Mammary epithelial cell (primary cell): ENCODE measurements at regions of chr2 and their contacts with region 1.

Region 1: GRCh38 chr2:63841254-63842022 is at the start of gene UGP2:
- DNase-seq: peak; percentile 94
- H3K4me3 ChIP-seq: peak within 1 kb of the TSS; percentile 77 to 99 (median 98)
- H3K27ac ChIP-seq: peak within 1 kb of the TSS; percentile 92
- H3K4me1 ChIP-seq: peaks cover 18% of the 10 kb centered on the region
- H3K27me3 ChIP-seq: no peaks in the 10 kb centered on the region
- CTCF ChIP-seq: peak in 1 of 2 donors; percentile 35
- total RNA-seq, gene UGP2: 141 to 248 TPM

Region 2: GRCh38 chr2:63588385-63589147 is 252.9 kb before region 1 on chr2 and contains the starts of genes MDH1 and WDPCP:
- CTCF ChIA-PET with region 1: no interaction called
- dilution Hi-C with region 1: no loop called
- in situ Hi-C with region 1: no loop called
- intact Hi-C with region 1: loop called (anchors 1 kb)
- DNase-seq: peak; percentile 100
- H3K4me3 ChIP-seq: peak within 1 kb of the TSS; percentile 77 to 91 (median 88)
- H3K27ac ChIP-seq: peak within 1 kb of the TSS; percentile 50
- H3K4me1 ChIP-seq: peaks cover 16% of the 10 kb centered on the region
- H3K27me3 ChIP-seq: no peaks in the 10 kb centered on the region
- CTCF ChIP-seq: no peak
- total RNA-seq, gene MDH1: 112 to 133 TPM
- total RNA-seq, gene WDPCP: 5.4 to 11.0 TPM

Region 3: GRCh38 chr2:63736354-63736753 is 105.1 kb before region 1 on chr2:
- CTCF ChIA-PET with region 1: no interaction called
- dilution Hi-C with region 1: no loop called
- in situ Hi-C with region 1: no loop called
- intact Hi-C with region 1: loop called (anchors 1 kb)
- DNase-seq: peak; percentile 13
- H3K4me3 ChIP-seq: no peak overlapping the region
- H3K27ac ChIP-seq: peak overlapping the region; percentile 92
- H3K4me1 ChIP-seq: peaks cover 46% of the 10 kb centered on the region
- H3K27me3 ChIP-seq: no peaks in the 10 kb centered on the region
- CTCF ChIP-seq: no peak

Region 4: DNA sequence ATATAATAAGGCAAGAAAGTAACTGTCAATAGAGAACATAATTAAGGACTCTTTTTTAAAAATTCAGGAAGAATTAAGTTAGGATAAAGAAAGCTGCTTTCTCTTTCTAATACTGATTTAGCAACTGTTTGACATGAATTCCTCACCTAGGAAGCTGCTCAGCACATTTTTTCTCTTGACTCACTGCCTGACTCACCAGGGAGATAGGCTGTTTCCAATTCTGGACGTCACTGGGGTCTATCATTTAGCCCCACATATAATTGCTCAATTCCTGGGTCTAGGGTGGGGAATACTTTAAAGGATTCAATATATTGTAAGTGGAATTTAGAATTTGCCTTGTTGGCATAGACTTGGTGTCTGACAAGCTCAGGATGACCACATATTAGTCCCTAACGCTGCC is 50.5 kb before region 1 on chr2:
- CTCF ChIA-PET with region 1: no interaction called
- dilution Hi-C with region 1: no loop called
- in situ Hi-C with region 1: no loop called
- intact Hi-C with region 1: loop called (anchors 1 kb)
- DNase-seq: peak; percentile 67
- H3K4me3 ChIP-seq: no peak overlapping the region
- H3K27ac ChIP-seq: peak overlapping the region; percentile 35
- H3K4me1 ChIP-seq: peaks cover 37% of the 10 kb centered on the region
- H3K27me3 ChIP-seq: no peaks in the 10 kb centered on the region
- CTCF ChIP-seq: no peak

Region 5: DNA sequence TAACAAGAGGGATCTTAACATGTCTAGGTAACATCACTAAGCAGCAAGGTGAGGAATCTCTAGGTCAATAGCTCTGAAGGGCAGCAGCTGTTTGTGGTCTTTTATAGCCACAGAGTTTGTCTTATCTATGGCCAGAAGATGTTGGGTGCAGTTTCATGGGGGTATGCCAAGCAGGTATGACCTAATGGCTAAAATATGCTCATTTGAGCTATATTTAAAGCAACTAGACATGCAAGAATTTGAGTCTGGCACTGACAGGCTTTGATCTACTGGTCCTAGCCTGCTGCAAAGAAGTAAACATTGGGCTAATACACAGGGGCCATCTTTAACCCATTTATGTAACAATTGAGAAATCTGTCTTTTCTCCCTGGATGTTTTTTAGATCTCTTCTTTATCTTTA is 13.7 kb before region 1 on chr2:
- CTCF ChIA-PET with region 1: no interaction called
- dilution Hi-C with region 1: no loop called
- in situ Hi-C with region 1: no loop called
- intact Hi-C with region 1: loop called (anchors 2 kb)
- DNase-seq: peak; percentile 73
- H3K4me3 ChIP-seq: no peak overlapping the region
- H3K27ac ChIP-seq: no peak overlapping the region
- H3K4me1 ChIP-seq: peaks cover 8% of the 10 kb centered on the region
- H3K27me3 ChIP-seq: no peaks in the 10 kb centered on the region
- CTCF ChIP-seq: no peak

Region 6: GRCh38 chr2:63861220-63861822 is 19.9 kb after region 1 on chr2:
- CTCF ChIA-PET with region 1: interaction called, 6 read pairs
- dilution Hi-C with region 1: no loop called
- in situ Hi-C with region 1: no loop called
- intact Hi-C with region 1: loop called (anchors 1 kb)
- DNase-seq: no peak
- H3K4me3 ChIP-seq: no peak overlapping the region
- H3K27ac ChIP-seq: no peak overlapping the region
- H3K4me1 ChIP-seq: peaks cover 40% of the 10 kb centered on the region
- H3K27me3 ChIP-seq: no peaks in the 10 kb centered on the region
- CTCF ChIP-seq: peak; percentile 40 to 57

Region 7: GRCh38 chr2:63888490-63889402 is 47.3 kb after region 1 on chr2:
- CTCF ChIA-PET with region 1: interaction called, 3 read pairs
- dilution Hi-C with region 1: no loop called
- in situ Hi-C with region 1: no loop called
- intact Hi-C with region 1: loop called (anchors 2 kb)
- DNase-seq: peak; percentile 41
- H3K4me3 ChIP-seq: no peak overlapping the region
- H3K27ac ChIP-seq: no peak overlapping the region
- H3K4me1 ChIP-seq: no peaks in the 10 kb centered on the region
- H3K27me3 ChIP-seq: no peaks in the 10 kb centered on the region
- CTCF ChIP-seq: peak; percentile 79 to 81